ENCODE measurements at regions of chr17 and their contacts with region 1.

Region 1: GRCh38 chr17:18203308-18203707 is 19.7 kb downstream of the ALKBH5 start:
- DNase-seq: no peak
- ATAC-seq: peak; percentile 17
- H3K4me3 Mint-ChIP-seq: no peak overlapping the region
- H3K27ac Mint-ChIP-seq: peak overlapping the region; percentile 9
- H3K4me1 Mint-ChIP-seq: peaks cover 16% of the 10 kb centered on the region
- H3K27me3 Mint-ChIP-seq: no peaks in the 10 kb centered on the region
- CTCF ChIP-seq: no peak

Region 2: GRCh38 chr17:18191967-18192366 is 11.3 kb before region 1 on chr17:
- CTCF ChIA-PET with region 1: interaction called, 10 read pairs
- POLR2A ChIA-PET with region 1: interaction called, 3 read pairs
- intact Hi-C with region 1: no loop called
- DNase-seq: peak; percentile 24
- ATAC-seq: peak; percentile 38
- H3K4me3 Mint-ChIP-seq: no peak overlapping the region
- H3K27ac Mint-ChIP-seq: no peak overlapping the region
- H3K4me1 Mint-ChIP-seq: peaks cover 74% of the 10 kb centered on the region
- H3K27me3 Mint-ChIP-seq: no peaks in the 10 kb centered on the region
- CTCF ChIP-seq: no peak